ENCODE measurements at regions of chr11 and their contacts with region 1.

Region 1: DNA sequence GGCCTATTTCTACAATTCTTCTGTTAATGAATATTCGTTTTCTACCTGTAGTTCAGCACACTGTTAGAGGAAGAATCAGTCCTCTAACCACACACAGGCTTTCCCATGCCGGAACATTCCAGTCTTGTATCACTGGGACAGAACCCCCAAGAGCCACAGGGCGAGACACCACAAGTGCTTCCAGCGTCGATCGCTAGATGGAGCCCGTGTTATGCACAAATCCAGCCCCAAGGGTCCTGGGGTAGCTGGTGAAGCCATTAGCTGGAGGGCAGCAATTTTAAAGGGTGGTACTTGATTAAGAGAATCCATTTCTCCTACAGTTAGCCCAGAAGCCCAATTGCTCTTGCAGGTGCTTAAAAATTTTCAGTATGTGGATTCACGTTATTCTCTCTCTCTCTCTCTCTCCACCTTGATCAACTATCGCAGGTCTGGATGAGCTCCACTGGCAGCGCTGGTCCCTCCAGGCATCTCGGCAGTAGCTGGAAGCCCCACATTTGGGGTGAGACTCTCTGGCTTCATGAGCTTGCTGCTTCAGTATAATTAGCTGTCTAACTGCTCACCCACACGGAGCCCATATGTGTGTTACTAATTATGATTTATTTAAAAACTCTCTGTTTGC is 148.2 kb upstream of the SNX19 start:
- DNase-seq: peak in 1 of 2 experiments; percentile 39
- H3K4me3 ChIP-seq: no peak overlapping the region
- H3K27ac ChIP-seq: no peak overlapping the region
- H3K4me1 ChIP-seq: no peaks in the 10 kb centered on the region
- H3K27me3 ChIP-seq: peaks cover 94% of the 10 kb centered on the region
- CTCF ChIP-seq: peak; percentile 85

Region 2: GRCh38 chr11:130918081-130918480 is 146.4 kb before region 1 on chr11:
- CTCF ChIA-PET with region 1: no interaction called
- POLR2A ChIA-PET with region 1: no interaction called
- intact Hi-C with region 1: loop called (anchors 1 kb)
- DNase-seq: no peak
- H3K4me3 ChIP-seq: no peak overlapping the region
- H3K27ac ChIP-seq: no peak overlapping the region
- H3K4me1 ChIP-seq: peaks cover 8% of the 10 kb centered on the region
- H3K27me3 ChIP-seq: peaks cover 39% of the 10 kb centered on the region
- CTCF ChIP-seq: no peak

Region 3: GRCh38 chr11:131674051-131674755 is 609.7 kb after region 1 on chr11:
- CTCF ChIA-PET with region 1: interaction called, 4 read pairs
- POLR2A ChIA-PET with region 1: no interaction called
- intact Hi-C with region 1: loop called (anchors 2 kb)
- DNase-seq: peak; percentile 41 to 55
- H3K4me3 ChIP-seq: no peak overlapping the region
- H3K27ac ChIP-seq: no peak overlapping the region
- H3K4me1 ChIP-seq: no peaks in the 10 kb centered on the region
- H3K27me3 ChIP-seq: peaks cover 46% of the 10 kb centered on the region; the same call in 1 of the 2 replicates
- CTCF ChIP-seq: peak; percentile 85